ENCODE measurements at regions of chr12 and their contacts with region 1.

Region 1: GRCh38 chr12:127293507-127294310 is 973.3 kb upstream of the TMEM132C start:
- DNase-seq: peak; percentile 93
- ATAC-seq: peak; percentile 98
- H3K4me3 ChIP-seq: no peak overlapping the region
- H3K27ac ChIP-seq: no peak overlapping the region
- H3K4me1 ChIP-seq: peaks cover 9% of the 10 kb centered on the region
- H3K27me3 ChIP-seq: no peaks in the 10 kb centered on the region
- CTCF ChIP-seq: peak; percentile 99

Region 2: GRCh38 chr12:126784328-126784921 is 509.3 kb before region 1 on chr12:
- CTCF ChIA-PET with region 1: no interaction called
- POLR2A ChIA-PET with region 1: no interaction called
- intact Hi-C with region 1: loop called (anchors 1 kb)
- DNase-seq: peak; percentile 81
- ATAC-seq: peak; percentile 84
- H3K4me3 ChIP-seq: no peak overlapping the region
- H3K27ac ChIP-seq: no peak overlapping the region
- H3K4me1 ChIP-seq: no peaks in the 10 kb centered on the region
- H3K27me3 ChIP-seq: peaks cover 76% of the 10 kb centered on the region
- CTCF ChIP-seq: peak; percentile 95

Region 3: GRCh38 chr12:127025545-127025944 is 268.2 kb before region 1 on chr12:
- CTCF ChIA-PET with region 1: no interaction called
- POLR2A ChIA-PET with region 1: interaction called, 4 read pairs
- intact Hi-C with region 1: loop called (anchors 1 kb)
- DNase-seq: peak; percentile 60
- ATAC-seq: peak; percentile 83
- H3K4me3 ChIP-seq: no peak overlapping the region
- H3K27ac ChIP-seq: no peak overlapping the region
- H3K4me1 ChIP-seq: no peaks in the 10 kb centered on the region
- H3K27me3 ChIP-seq: no peaks in the 10 kb centered on the region
- CTCF ChIP-seq: peak; percentile 72

Region 4: DNA sequence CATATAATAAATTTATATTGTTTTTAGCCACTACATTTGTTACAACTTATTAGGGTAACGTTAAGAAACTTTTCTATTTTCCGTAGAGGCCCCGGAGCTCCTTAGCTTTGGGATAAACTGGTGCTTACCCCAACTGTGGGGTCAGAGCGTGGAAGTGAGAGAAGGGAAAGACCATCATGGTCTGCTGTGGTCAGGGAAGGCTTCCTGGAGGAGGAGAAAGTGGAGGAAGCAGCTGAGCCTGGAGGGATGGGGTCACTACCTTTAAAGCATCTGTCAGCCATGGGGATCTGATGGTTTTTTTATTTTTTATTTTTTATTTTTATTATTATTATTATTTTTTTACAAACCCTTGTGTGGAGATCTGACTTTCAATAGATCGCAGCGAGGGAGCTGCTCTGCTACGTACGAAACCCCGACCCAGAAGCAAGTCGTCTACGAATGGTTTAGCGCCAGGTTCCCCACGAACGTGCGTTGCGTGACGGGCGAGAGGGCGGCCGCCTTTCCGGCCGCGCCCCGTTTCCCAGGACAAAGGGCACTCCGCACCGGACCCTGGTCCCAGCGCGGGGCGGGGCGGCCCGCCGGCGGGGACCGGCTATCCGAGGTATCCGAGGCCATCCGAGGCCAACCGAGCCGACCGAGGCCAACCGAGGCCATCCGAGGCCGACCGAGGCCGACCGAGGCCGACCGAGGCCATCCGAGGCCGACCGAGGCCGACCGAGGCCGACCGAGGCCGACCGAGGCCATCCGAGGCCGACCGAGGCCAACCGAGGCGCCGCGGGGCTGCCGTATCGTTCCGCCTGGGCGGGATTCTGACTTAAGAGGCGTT is 127.9 kb before region 1 on chr12:
- CTCF ChIA-PET with region 1: interaction called, 3 read pairs
- POLR2A ChIA-PET with region 1: interaction called, 13 read pairs
- intact Hi-C with region 1: no loop called
- DNase-seq: peak; percentile 82
- ATAC-seq: peak; percentile 91
- H3K4me3 ChIP-seq: peak overlapping the region; percentile 48; the same call in 1 of the 2 replicates
- H3K27ac ChIP-seq: peak overlapping the region; percentile 38
- H3K4me1 ChIP-seq: peaks cover 21% of the 10 kb centered on the region
- H3K27me3 ChIP-seq: no peaks in the 10 kb centered on the region
- CTCF ChIP-seq: no peak

Region 5: GRCh38 chr12:128069359-128069997 is 775.8 kb after region 1 on chr12:
- CTCF ChIA-PET with region 1: no interaction called
- POLR2A ChIA-PET with region 1: no interaction called
- intact Hi-C with region 1: loop called (anchors 5 kb)
- DNase-seq: peak; percentile 92
- ATAC-seq: peak; percentile 75
- H3K4me3 ChIP-seq: no peak overlapping the region
- H3K27ac ChIP-seq: no peak overlapping the region
- H3K4me1 ChIP-seq: no peaks in the 10 kb centered on the region
- H3K27me3 ChIP-seq: peaks cover 57% of the 10 kb centered on the region
- CTCF ChIP-seq: peak; percentile 95